HEK293 (cell line): ENCODE measurements at regions of chr3 and their contacts with region 1.

Region 1: GRCh38 chr3:11060500-11061251 is 68.1 kb downstream of the SLC6A1 start:
- H3K4me3 ChIP-seq: no peak overlapping the region
- H3K27ac ChIP-seq: no peak overlapping the region
- H3K4me1 ChIP-seq: no peaks in the 10 kb centered on the region
- CTCF ChIP-seq: peak; percentile 87

Region 2: DNA sequence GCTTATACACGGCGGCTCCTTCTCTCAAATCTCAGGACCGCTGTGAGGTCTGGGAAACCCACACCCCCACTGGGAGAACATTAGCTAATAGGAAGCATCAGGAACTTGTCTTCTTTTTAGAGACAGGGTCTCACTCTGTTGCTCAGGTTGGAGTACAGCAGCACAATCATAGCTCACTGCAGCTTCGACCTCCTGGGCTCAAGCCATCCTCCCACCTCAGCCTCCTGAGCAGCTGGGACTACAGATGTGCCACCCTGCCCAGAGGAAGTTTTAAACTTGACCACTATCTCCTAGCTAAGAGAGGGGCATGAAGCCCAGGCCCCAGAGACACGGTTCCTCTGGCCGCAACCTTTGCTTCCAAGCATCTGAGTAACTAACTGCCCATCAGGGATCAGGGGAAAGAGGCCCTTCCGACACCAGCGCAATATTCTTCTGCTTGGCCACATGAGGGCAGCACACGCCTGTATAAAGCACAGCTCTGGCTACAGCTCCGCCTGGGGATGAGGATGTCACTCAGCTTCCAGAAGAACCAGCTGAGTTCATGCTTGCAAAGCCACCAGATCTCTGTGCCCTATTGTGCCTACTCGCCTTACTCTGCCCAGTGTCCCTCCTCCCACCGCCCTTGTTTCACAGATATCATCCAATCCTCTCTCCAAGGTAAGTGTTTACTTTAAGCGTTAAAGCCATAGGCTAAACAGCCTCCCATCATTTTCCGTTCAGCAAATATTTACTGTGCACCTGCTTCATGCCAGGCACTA is 302.2 kb before region 1 on chr3:
- CTCF ChIA-PET with region 1: interaction called, 65 read pairs
- POLR2A ChIA-PET with region 1: no interaction called
- H3K4me3 ChIP-seq: no peak overlapping the region
- H3K27ac ChIP-seq: no peak overlapping the region
- H3K4me1 ChIP-seq: no peaks in the 10 kb centered on the region
- CTCF ChIP-seq: peak; percentile 91

Region 3: DNA sequence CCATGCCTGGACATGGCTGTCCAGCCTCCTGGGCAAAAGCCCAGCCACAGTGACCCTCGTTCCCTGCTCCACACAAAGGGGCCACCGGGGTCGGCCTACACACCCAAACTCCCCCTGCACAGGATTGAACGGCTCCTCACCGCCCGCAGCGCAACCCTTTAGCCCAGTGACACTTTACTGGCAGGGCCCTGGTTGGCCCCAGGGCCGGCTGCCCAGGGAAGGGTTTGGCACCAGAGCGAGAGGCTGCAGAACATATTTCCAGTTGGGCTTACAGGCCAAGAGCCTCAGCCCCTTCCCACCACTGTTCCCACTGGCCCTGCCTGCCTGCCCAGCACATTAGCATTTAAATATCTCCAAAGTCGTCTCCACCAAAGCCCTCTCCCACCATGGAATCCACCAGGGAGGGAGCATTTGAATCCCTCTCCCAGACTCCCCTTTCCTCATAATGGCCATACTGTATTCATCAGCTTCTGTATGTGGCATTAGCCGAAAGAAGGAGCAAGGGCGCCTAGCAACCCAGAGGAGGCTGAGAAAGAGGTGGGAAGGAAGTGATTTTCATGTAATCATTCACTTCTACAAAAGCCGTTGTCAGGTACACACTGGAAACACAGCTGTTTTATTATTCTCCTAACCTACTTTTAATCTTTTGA is 159.3 kb before region 1 on chr3:
- CTCF ChIA-PET with region 1: no interaction called
- POLR2A ChIA-PET with region 1: no interaction called
- H3K4me3 ChIP-seq: no peak overlapping the region
- H3K27ac ChIP-seq: no peak overlapping the region
- H3K4me1 ChIP-seq: no peaks in the 10 kb centered on the region
- CTCF ChIP-seq: no peak

Region 4: GRCh38 chr3:10957976-10958749 is 102.5 kb before region 1 on chr3:
- CTCF ChIA-PET with region 1: interaction called, 17 read pairs
- POLR2A ChIA-PET with region 1: no interaction called
- H3K4me3 ChIP-seq: no peak overlapping the region
- H3K27ac ChIP-seq: no peak overlapping the region
- H3K4me1 ChIP-seq: peaks cover 2% of the 10 kb centered on the region; the same call in 1 of the 2 replicates
- CTCF ChIP-seq: no peak

Region 5: DNA sequence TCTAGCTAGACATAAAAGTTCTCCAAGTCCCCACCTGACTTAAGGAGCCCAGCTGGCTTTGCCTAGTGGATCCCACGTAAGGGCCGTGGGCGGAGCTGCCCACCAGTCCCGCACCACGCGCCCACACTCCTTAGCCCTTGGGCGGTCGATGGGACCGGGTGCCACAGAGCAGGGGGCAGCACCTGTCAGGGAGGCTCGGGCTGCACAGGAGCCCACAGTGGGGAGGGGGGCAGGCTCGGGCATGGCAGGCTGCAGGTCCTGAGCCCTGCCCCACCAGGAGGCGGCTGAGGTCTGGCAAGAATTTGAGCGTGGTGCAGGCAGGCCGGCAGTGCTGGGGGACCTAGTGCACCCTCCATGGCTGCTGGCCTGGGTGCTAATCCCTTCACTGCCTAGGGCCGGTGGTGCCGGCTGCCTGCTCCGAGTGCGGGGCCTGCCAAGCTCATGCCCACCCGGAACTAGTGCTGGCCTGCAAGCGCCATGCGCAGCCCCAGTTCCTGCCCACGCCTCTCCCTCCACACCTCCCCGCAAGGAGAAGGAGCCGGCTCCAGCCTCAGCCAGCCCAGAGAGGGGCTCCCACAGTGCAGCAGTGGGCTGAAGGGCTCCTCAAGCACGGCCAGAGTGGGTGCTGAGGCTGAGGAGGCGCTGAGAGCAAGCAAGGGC is 10.6 kb after region 1 on chr3:
- CTCF ChIA-PET with region 1: interaction called, 16 read pairs
- POLR2A ChIA-PET with region 1: interaction called, 3 read pairs
- H3K4me3 ChIP-seq: no peak overlapping the region
- H3K27ac ChIP-seq: no peak overlapping the region
- H3K4me1 ChIP-seq: no peaks in the 10 kb centered on the region
- CTCF ChIP-seq: no peak

Region 6: DNA sequence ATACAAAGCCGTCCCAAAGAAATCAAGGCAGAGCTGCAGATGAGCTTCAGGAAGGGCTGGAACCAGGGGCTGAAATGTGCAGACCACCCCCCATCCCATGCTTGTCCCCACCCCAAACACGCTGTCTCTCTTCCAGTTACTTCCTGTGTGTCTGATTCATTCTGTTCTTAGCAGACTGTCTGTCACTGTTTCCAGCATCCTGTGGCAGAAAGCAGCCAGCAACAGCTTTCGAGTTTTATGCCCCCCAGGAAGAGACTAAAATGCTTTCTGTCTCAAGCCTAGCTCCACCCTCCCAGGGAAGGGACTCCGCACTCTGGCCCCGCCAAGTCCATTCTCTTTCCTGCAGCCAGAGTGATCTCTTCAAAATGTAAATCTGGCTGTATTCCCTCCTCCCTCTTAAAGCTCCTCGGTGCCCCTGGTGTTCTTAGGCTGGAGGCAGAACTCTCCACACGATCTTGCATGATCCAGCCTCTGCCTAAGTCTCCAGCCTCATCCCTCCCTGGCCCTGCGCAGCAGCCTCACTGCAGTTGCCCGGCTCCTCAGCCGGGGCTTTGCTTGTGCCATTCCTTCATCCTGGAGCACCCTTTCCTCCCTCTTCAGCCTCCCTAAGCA is 135.2 kb after region 1 on chr3:
- CTCF ChIA-PET with region 1: interaction called, 12 read pairs
- POLR2A ChIA-PET with region 1: no interaction called
- H3K4me3 ChIP-seq: no peak overlapping the region
- H3K27ac ChIP-seq: no peak overlapping the region
- H3K4me1 ChIP-seq: no peaks in the 10 kb centered on the region
- CTCF ChIP-seq: no peak

Region 7: GRCh38 chr3:11335056-11335608 is 274.5 kb after region 1 on chr3:
- CTCF ChIA-PET with region 1: interaction called, 65 read pairs
- POLR2A ChIA-PET with region 1: no interaction called
- H3K4me3 ChIP-seq: no peak overlapping the region
- H3K27ac ChIP-seq: no peak overlapping the region
- H3K4me1 ChIP-seq: no peaks in the 10 kb centered on the region
- CTCF ChIP-seq: no peak